ENCODE measurements at regions of chr1 and their contacts with region 1.

Region 1: GRCh38 chr1:161225534-161226319 is at the start of gene TOMM40L:
- DNase-seq: peak; percentile 94
- CTCF ChIP-seq: peak; percentile 58

Region 2: DNA sequence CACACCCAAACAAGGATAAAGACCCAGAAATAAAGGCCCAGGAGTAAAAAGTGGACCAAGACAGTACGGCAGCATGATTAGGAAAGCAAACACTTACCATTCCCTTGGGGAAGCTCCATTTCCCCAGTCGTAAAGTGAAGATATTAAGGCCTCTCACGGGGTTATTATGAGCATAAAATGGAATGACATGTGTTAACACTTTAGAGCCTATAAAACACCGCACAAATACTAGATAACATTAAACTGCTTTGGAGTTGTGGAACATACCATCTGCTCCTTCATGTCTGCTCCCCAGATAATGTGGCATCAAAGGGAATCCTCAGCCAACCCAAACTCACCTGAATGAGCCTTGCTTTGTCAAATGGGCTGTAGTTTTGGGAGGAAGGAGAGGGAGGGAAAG is 262.2 kb before region 1 on chr1:
- CTCF ChIA-PET with region 1: no interaction called
- POLR2A ChIA-PET with region 1: no interaction called
- DNase-seq: no peak
- CTCF ChIP-seq: no peak

Region 3: GRCh38 chr1:161185282-161185682 is 40.4 kb before region 1 on chr1:
- CTCF ChIA-PET with region 1: interaction called, 11 read pairs
- POLR2A ChIA-PET with region 1: no interaction called
- DNase-seq: peak; percentile 85
- CTCF ChIP-seq: no peak

Region 4: GRCh38 chr1:161209790-161210409 is 15.8 kb before region 1 on chr1:
- CTCF ChIA-PET with region 1: interaction called, 248 read pairs
- POLR2A ChIA-PET with region 1: interaction called, 3 read pairs
- DNase-seq: peak; percentile 74
- CTCF ChIP-seq: peak; percentile 90

Region 5: DNA sequence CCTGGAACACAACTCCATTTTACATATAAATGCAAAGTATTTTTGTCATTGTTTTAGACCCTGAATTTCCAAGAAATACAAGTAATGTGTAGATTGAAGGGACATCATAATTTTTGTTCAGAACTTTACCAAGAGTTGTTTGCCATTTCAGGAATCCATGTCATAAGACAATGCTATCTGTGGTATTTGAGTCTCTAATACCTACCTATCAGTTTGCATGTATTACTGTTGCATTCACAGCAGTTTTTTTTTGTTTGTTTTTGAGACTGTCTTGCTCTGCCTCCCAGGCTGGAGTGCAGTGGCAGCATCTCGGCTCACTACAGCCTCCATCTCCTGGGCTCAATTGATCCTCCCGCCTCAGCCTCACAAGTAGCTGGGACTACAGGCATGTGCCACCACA is 66.9 kb after region 1 on chr1:
- CTCF ChIA-PET with region 1: interaction called, 119 read pairs
- POLR2A ChIA-PET with region 1: interaction called, 3 read pairs
- DNase-seq: no peak
- CTCF ChIP-seq: no peak

Region 6: GRCh38 chr1:161367684-161368400 is 142.1 kb after region 1 on chr1 and contains the start of gene CFAP126:
- CTCF ChIA-PET with region 1: interaction called, 22 read pairs
- POLR2A ChIA-PET with region 1: no interaction called
- DNase-seq: peak; percentile 82
- CTCF ChIP-seq: peak; percentile 24

Region 7: DNA sequence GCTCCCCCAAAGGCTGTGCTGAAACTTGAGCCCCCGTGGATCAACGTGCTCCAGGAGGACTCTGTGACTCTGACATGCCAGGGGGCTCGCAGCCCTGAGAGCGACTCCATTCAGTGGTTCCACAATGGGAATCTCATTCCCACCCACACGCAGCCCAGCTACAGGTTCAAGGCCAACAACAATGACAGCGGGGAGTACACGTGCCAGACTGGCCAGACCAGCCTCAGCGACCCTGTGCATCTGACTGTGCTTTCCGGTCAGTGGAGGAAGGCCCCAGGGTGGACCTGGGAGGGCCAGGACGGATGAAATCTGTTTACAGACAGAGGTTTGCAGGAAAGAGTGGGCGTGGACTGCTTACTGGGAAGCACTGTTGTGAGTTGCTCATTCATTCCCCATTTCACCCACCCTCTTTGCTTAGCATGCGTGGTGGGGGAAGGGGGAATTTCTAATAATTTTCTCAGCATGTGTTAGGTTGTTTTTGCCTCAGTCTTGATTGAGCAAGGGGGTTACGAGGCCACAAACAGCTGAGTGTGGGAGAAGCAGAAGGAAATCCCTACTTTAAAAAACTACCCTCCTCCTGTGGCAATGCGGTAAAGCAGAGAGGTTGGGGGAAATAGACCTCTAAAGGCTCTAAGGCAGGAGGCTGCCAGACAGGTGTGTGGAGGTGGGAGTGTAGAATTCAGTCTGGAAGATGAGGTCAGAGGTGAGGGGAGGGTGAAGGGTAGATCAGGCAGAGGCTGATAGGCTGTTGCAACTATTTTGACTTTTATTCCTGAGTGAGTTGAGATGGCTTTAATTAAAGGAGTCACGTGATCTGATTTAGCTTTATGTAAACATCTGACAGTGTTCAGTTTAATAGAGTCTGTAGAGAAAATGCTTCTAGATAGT is 280.9 kb after region 1 on chr1:
- CTCF ChIA-PET with region 1: no interaction called
- POLR2A ChIA-PET with region 1: no interaction called
- DNase-seq: no peak
- CTCF ChIP-seq: no peak

Measured in GM10248 (cell line).